PC-3 (cell line): ENCODE measurements at regions of chr4 and their contacts with region 1.

Region 1: GRCh38 chr4:57147335-57148060 is 37.3 kb upstream of the IGFBP7 start:
- DNase-seq: no peak
- ATAC-seq: no peak
- H3K4me3 ChIP-seq: no peak overlapping the region
- H3K27ac ChIP-seq: no peak overlapping the region
- H3K4me1 ChIP-seq: peaks cover 13% of the 10 kb centered on the region
- H3K27me3 ChIP-seq: no peaks in the 10 kb centered on the region
- CTCF ChIP-seq: no peak

Region 2: DNA sequence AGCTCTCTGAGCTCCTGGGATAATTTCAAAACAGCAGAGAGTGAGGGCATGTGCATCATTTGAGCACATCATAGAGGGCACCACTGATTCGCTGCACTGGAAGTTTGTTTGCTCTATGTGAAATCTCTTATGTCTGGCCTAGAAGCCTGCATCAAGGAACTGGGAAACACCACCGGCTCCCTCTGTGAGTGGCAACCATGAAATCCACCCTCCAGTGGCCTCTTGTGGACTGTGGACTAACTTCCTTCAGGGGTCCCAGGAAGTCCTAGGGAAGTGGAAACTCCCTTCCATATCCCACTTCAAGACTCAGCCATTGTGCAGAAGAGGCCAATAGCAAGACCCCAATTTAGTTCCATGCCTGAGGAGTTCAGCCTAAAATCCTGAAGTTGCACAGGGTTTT is 10.7 kb after region 1 on chr4:
- CTCF ChIA-PET with region 1: interaction called, 11 read pairs
- POLR2A ChIA-PET with region 1: no interaction called
- intact Hi-C with region 1: no loop called
- DNase-seq: no peak
- ATAC-seq: peak; percentile 35; the same call in 1 of the 2 replicates
- H3K4me3 ChIP-seq: no peak overlapping the region
- H3K27ac ChIP-seq: no peak overlapping the region
- H3K4me1 ChIP-seq: peaks cover 11% of the 10 kb centered on the region
- H3K27me3 ChIP-seq: peaks cover 7% of the 10 kb centered on the region; the same call in 1 of the 2 replicates
- CTCF ChIP-seq: peak; percentile 34; the same call in 1 of the 2 replicates